Naive thymus-derived CD4-positive, alpha-beta T cell (primary cell): ENCODE measurements at regions of chrX and their contacts with region 1.

Region 1: GRCh38 chrX:13142891-13143290 is 98.5 kb upstream of the FAM9C start:
- DNase-seq: no peak
- ATAC-seq: peak; percentile 61
- H3K4me3 ChIP-seq: no peak overlapping the region
- H3K4me3 Mint-ChIP-seq: peak overlapping the region in 2 of 10 donors; percentile 10 to 18
- H3K27ac ChIP-seq: no peak overlapping the region
- H3K27ac Mint-ChIP-seq: peak overlapping the region in 4 of 9 donors; percentile 29 to 70 (median 48)
- H3K4me1 ChIP-seq: no peaks in the 10 kb centered on the region
- H3K4me1 Mint-ChIP-seq: peaks cover 0 to 16% (median 9%) of the 10 kb centered on the region in 7 donors
- H3K27me3 ChIP-seq: no peaks in the 10 kb centered on the region
- H3K27me3 Mint-ChIP-seq: no peaks in the 10 kb centered on the region

Region 2: GRCh38 chrX:13081395-13082205 is 61.3 kb before region 1 on chrX:
- CTCF ChIA-PET with region 1: no interaction called
- POLR2A ChIA-PET with region 1: no interaction called
- intact Hi-C with region 1: no loop called
- DNase-seq: peak in 6 of 9 donors; percentile 27 to 55 (median 43)
- ATAC-seq: peak; percentile 47
- H3K4me3 ChIP-seq: peak overlapping the region; percentile 1
- H3K4me3 Mint-ChIP-seq: peak overlapping the region in 9 of 10 donors; percentile 50 to 79 (median 63)
- H3K27ac ChIP-seq: peak overlapping the region; percentile 88
- H3K27ac Mint-ChIP-seq: peak overlapping the region; percentile 92 to 99 (median 96)
- H3K4me1 ChIP-seq: peaks cover 63 to 82% of the 10 kb centered on the region in 2 donors
- H3K4me1 Mint-ChIP-seq: peaks cover 33 to 98% (median 83%) of the 10 kb centered on the region in 7 donors
- H3K27me3 ChIP-seq: no peaks in the 10 kb centered on the region
- H3K27me3 Mint-ChIP-seq: no peaks in the 10 kb centered on the region

Region 3: DNA sequence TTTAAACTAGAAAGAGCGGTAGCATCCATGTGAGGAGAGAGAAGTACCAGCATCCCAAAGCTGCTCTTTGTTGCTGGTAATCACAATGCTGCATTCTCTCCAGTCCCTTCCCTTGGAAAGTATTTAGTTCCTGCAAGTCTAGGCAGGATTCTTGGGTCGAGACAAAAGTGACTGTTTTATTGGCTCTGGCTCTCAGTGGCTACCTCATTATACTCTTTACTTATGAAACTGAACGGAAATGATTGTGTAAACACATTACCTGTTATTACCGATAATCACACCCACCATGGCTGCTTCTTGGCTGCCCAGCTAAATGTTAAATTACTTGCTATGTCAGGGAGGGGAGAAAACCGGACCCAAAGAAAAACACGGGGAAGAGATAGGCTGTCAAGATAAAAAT is 150.8 kb after region 1 on chrX:
- CTCF ChIA-PET with region 1: no interaction called
- POLR2A ChIA-PET with region 1: no interaction called
- intact Hi-C with region 1: loop called in 1 of 2 experiments (anchors 10 kb)
- DNase-seq: no peak
- ATAC-seq: no peak
- H3K4me3 ChIP-seq: no peak overlapping the region
- H3K4me3 Mint-ChIP-seq: no peak overlapping the region
- H3K27ac ChIP-seq: no peak overlapping the region
- H3K27ac Mint-ChIP-seq: no peak overlapping the region
- H3K4me1 ChIP-seq: no peaks in the 10 kb centered on the region
- H3K4me1 Mint-ChIP-seq: peaks cover 0 to 1% (median 0%) of the 10 kb centered on the region in 7 donors
- H3K27me3 ChIP-seq: no peaks in the 10 kb centered on the region
- H3K27me3 Mint-ChIP-seq: no peaks in the 10 kb centered on the region